Activated CD4-positive, alpha-beta T cell treated with anti-CD3 and anti-CD28 coated beads for 36 hours (primary cell): ENCODE measurements at regions of chr5 and their contacts with region 1.

Region 1: DNA sequence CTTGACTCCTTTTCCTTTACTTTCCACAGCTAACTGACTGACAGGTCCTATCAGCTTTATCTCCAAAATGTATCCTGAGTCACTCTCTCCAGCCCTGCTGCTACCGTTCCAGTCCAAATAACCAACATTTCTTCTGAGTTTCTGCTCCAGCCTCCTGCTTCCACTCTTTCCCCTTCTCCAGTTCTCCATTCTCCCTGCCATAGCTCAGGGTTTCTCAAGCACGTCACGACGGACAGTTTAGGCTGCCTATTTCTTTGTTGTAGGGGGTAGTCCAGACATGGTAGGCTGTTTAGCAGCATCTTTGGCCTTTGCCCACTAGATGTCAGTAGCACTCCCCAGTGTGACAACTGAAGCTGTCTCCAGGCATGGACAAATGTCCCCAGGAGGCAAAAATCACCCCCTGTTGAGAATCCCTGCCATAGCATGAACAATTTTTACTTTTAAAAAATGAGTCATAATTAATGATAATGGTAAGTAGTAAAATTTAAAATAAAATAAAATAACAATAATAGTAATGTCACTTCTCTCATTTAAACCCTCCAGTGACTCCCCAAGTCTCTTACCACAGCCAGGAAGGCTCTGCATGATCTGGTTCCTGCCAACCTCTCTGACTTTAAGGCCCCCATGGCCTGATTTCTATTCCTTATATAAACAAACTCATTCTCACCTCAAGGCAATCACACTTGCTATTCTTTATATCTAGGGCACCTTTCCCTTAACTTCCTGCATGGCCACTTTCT is 105.4 kb upstream of the FER start:
- DNase-seq: peak; percentile 71
- ATAC-seq: peak; percentile 98
- H3K4me3 Mint-ChIP-seq: no peak overlapping the region
- H3K27ac Mint-ChIP-seq: no peak overlapping the region
- H3K4me1 Mint-ChIP-seq: peaks cover 3% of the 10 kb centered on the region
- H3K27me3 Mint-ChIP-seq: peaks cover 3% of the 10 kb centered on the region

Region 2: DNA sequence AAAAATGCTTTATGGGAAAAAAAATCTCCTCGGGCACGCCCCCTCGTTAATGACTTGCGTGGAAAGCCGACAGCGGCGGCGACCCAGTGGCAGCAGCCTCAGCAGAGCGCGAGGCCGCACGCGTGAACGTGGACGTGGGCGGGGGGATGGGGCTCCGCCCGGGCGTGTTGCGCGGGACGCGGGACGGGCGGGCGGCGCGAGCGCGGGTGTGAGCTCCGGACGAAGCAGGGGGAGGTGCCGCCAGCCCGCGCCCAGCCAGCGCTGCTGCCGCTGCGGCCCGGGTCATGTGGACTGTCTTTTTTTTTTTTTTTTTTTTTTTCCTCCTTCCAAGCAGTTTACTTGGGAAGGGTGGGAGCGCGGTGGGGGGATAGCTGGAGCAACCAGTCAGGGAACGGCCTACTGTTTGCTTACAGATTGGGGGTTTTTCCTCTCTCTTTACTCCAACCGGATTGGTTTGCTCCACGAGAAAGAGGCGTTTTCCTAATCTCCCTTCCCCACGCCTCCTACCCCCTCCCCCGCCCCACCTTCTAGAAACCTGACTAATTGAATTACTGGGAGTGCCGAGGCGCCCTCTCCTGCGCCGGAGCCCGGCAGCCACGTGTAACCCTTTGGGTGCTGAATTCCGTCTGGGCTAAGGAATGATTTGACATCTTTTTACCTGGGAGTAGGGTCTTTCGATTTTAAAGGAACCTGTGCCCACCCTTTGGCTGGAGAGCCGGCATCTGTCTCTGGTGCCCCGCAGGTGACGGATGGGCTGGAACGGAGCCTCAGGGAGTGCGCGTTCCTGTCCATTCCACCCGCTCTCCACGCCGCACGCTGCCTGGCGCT is 969.9 kb before region 1 on chr5:
- CTCF ChIA-PET with region 1: no interaction called
- POLR2A ChIA-PET with region 1: no interaction called
- intact Hi-C with region 1: no loop called
- DNase-seq: peak; percentile 48
- ATAC-seq: no peak
- H3K4me3 Mint-ChIP-seq: peak overlapping the region; percentile 67
- H3K27ac Mint-ChIP-seq: no peak overlapping the region
- H3K4me1 Mint-ChIP-seq: peaks cover 31% of the 10 kb centered on the region
- H3K27me3 Mint-ChIP-seq: peaks cover 62% of the 10 kb centered on the region

Region 3: GRCh38 chr5:109439590-109439989 is 797.3 kb after region 1 on chr5:
- CTCF ChIA-PET with region 1: no interaction called
- POLR2A ChIA-PET with region 1: no interaction called
- intact Hi-C with region 1: loop called in 1 of 2 experiments (anchors 1 kb)
- DNase-seq: no peak
- ATAC-seq: no peak
- H3K4me3 Mint-ChIP-seq: no peak overlapping the region
- H3K27ac Mint-ChIP-seq: no peak overlapping the region
- H3K4me1 Mint-ChIP-seq: no peaks in the 10 kb centered on the region
- H3K27me3 Mint-ChIP-seq: no peaks in the 10 kb centered on the region

Region 4: GRCh38 chr5:109468737-109469420 is 826.5 kb after region 1 on chr5:
- CTCF ChIA-PET with region 1: interaction called, 4 read pairs
- POLR2A ChIA-PET with region 1: no interaction called
- intact Hi-C with region 1: loop called (anchors 5 to 10 kb)
- DNase-seq: peak; percentile 87
- ATAC-seq: peak; percentile 70
- H3K4me3 Mint-ChIP-seq: no peak overlapping the region
- H3K27ac Mint-ChIP-seq: no peak overlapping the region
- H3K4me1 Mint-ChIP-seq: peaks cover 3% of the 10 kb centered on the region
- H3K27me3 Mint-ChIP-seq: peaks cover 2% of the 10 kb centered on the region

Region 5: GRCh38 chr5:110625376-110625999 is 1983.2 kb after region 1 on chr5:
- CTCF ChIA-PET with region 1: no interaction called
- POLR2A ChIA-PET with region 1: no interaction called
- intact Hi-C with region 1: loop called in 1 of 2 experiments (anchors 5 kb)
- DNase-seq: no peak
- ATAC-seq: no peak
- H3K4me3 Mint-ChIP-seq: no peak overlapping the region
- H3K27ac Mint-ChIP-seq: no peak overlapping the region
- H3K4me1 Mint-ChIP-seq: no peaks in the 10 kb centered on the region
- H3K27me3 Mint-ChIP-seq: no peaks in the 10 kb centered on the region